Posterior vena cava (tissue), 2 donors: ENCODE measurements at regions of chr1 and their contacts with region 1.

Region 1: GRCh38 chr1:97565886-97566285 is 354.9 kb downstream of the DPYD start:
- DNase-seq: no peak

Region 2: DNA sequence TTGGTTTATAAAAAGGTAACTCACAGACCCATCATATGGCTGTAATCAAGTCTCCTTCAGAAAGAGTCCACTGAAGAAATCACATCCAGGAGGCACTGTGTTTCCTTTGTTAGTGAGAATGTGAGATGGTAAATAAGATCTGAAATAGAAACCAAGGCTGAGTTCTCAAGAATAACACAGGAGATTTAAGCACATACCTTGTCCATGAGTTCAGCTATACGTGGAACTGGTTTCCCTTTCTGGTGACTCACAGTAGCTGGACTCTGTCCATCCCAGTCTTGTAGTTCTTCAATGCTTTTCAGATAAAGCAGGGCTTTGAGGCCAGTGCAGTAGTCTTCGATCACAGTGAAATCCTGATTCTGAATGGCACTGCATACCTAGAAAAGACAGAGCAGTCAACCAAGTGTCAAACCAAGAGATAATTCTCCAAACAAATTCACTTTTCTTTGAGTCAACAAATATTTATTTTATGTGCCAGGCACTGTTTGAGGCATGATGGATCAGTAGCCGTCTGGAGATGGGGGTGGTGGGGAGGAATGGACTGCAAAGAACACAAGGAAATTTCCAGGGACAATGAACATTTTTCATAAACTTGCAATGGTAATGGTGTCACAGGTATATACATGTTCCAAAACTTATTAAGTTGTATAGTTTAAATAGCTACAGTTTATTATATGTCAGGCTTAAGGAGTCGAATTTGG is 372.9 kb before region 1 on chr1:
- intact Hi-C with region 1: loop called in 1 of 2 experiments (anchors 5 kb)
- DNase-seq: no peak